IMR-90 (cell line): ENCODE measurements at regions of chr2 and their contacts with region 1.

Region 1: DNA sequence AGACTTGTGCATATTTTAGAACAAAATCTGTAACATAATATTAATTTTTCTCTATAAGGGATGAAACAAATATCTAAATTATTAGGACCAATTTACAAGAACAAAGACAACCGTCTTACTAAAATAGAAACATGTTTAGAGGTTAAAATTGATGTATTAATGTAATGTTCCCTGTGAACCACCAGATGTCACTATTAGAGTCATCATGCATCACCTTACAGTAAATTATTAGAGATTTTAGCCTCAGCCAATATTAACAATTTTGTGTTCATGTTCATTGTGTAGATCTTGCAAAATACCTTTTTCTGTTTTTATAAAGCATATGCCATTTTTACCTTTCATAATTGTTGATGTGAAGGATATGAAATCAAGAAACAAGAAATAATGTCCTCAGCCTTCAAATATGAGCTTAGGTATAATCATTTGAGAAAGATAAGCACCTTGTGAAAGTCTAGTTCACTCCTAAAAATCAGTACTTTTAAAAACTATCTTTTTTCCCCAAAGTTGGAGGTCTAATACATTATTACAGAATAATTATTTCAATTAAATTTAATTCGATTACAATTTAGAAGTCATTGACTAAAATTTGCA is 344.3 kb upstream of the KCNH7 start:
- DNase-seq: peak; percentile 32
- ATAC-seq: 0 out of 2 replicates have a peak, but pooled peaks have one; percentile 51
- H3K4me3 ChIP-seq: no peak overlapping the region
- H3K27ac ChIP-seq: no peak overlapping the region
- H3K4me1 ChIP-seq: no peaks in the 10 kb centered on the region
- H3K27me3 ChIP-seq: peaks cover 2% of the 10 kb centered on the region; the same call in 1 of the 2 replicates
- CTCF ChIP-seq: peak; percentile 60
- POLR2A ChIP-seq: no peak
- RAD21 ChIP-seq: peak; percentile 51

Region 2: DNA sequence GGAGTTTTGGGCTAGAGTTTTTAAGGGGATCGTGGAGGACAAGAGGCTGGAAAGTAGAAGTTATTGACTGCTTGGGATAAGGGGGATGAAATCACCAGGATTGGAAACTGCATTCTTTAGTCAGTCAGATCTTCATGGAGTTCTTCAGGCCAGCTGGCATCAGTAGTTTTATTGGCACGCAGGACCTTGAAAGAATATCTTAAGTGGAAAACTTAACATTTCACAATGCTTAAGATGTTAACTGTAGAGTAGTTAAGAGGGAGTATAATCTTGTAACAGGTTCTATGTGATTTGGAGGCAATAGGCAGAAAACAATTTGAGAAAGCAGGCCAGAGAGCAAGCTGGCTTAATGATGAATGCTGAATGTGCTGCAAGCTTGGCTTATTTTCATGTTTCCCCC is 43.9 kb before region 1 on chr2:
- CTCF ChIA-PET with region 1: no interaction called
- POLR2A ChIA-PET with region 1: no interaction called
- dilution Hi-C with region 1: no loop called
- in situ Hi-C with region 1: no loop called
- intact Hi-C with region 1: no loop called
- DNase-seq: no peak
- ATAC-seq: no peak
- H3K4me3 ChIP-seq: no peak overlapping the region
- H3K27ac ChIP-seq: no peak overlapping the region
- H3K4me1 ChIP-seq: no peaks in the 10 kb centered on the region
- H3K27me3 ChIP-seq: no peaks in the 10 kb centered on the region
- CTCF ChIP-seq: no peak
- POLR2A ChIP-seq: no peak
- RAD21 ChIP-seq: no peak

Region 3: DNA sequence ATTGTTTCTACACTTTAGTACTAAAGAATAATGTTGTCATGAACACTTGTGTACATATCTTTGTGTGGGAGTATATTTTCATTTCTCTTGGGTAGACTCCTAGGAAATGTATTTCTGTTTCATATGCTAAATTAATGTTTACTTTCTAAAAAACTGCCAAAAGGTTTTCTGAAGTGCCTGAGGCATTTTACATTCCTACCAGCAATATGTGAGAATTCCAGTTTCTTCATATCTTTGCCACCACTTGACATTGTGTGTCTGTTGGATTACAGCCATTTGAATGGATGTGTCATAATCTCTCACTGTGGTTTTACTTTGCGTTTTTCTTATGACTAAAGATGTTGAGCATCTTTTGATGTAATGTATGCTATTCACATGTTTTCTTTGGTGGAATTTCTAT is 83.9 kb after region 1 on chr2:
- CTCF ChIA-PET with region 1: no interaction called
- POLR2A ChIA-PET with region 1: no interaction called
- dilution Hi-C with region 1: no loop called
- in situ Hi-C with region 1: no loop called
- intact Hi-C with region 1: no loop called
- DNase-seq: peak; percentile 81
- ATAC-seq: peak; percentile 80
- H3K4me3 ChIP-seq: no peak overlapping the region
- H3K27ac ChIP-seq: no peak overlapping the region
- H3K4me1 ChIP-seq: no peaks in the 10 kb centered on the region
- H3K27me3 ChIP-seq: no peaks in the 10 kb centered on the region
- CTCF ChIP-seq: no peak
- POLR2A ChIP-seq: no peak
- RAD21 ChIP-seq: no peak

Region 4: DNA sequence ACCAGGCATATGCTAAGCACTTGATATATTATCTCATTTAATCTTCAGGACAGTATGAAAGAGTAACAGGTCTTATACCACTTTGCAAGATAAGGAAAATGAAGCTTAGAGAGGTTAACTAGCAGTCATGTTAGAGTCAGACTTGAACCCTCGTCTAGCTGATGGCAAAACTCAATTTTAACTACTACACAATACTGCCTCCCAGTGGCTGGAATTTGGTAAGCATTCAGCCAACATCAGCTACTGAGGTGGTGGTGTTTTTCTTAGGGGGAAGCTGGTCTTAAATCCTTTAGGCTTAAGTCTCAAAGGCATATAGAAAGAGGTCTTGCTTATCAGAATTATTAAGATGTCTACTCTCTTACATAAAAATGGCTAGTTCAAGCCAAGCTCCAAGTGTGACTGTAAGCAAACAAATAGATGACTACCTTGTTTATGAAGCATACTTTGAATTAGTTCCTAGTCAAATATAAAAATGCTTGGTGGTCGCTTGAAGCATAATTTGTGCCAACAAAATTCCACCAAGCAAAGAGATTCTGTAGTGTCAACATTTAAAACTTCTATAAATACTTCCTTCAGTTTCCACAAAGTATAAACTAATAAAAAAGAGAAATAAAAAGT is 878.4 kb after region 1 on chr2:
- CTCF ChIA-PET with region 1: interaction called, 11 read pairs
- POLR2A ChIA-PET with region 1: no interaction called
- dilution Hi-C with region 1: no loop called
- in situ Hi-C with region 1: loop called (anchors 5 kb)
- intact Hi-C with region 1: no loop called
- DNase-seq: peak; percentile 21
- ATAC-seq: peak; percentile 59; the same call in 1 of the 2 replicates
- H3K4me3 ChIP-seq: no peak overlapping the region
- H3K27ac ChIP-seq: no peak overlapping the region
- H3K4me1 ChIP-seq: no peaks in the 10 kb centered on the region
- H3K27me3 ChIP-seq: no peaks in the 10 kb centered on the region
- CTCF ChIP-seq: peak; percentile 66
- POLR2A ChIP-seq: no peak
- RAD21 ChIP-seq: peak; percentile 66

Region 5: GRCh38 chr2:164538240-164538866 is 1355.5 kb after region 1 on chr2:
- CTCF ChIA-PET with region 1: interaction called, 3 read pairs
- POLR2A ChIA-PET with region 1: no interaction called
- dilution Hi-C with region 1: no loop called
- in situ Hi-C with region 1: no loop called
- intact Hi-C with region 1: loop called (anchors 5 kb)
- DNase-seq: peak; percentile 29
- ATAC-seq: peak; percentile 82
- H3K4me3 ChIP-seq: no peak overlapping the region
- H3K27ac ChIP-seq: no peak overlapping the region
- H3K4me1 ChIP-seq: no peaks in the 10 kb centered on the region
- H3K27me3 ChIP-seq: no peaks in the 10 kb centered on the region
- CTCF ChIP-seq: peak; percentile 50
- POLR2A ChIP-seq: no peak
- RAD21 ChIP-seq: peak; percentile 48

Region 6: GRCh38 chr2:164554487-164554886 is 1371.6 kb after region 1 on chr2:
- CTCF ChIA-PET with region 1: interaction called, 12 read pairs
- POLR2A ChIA-PET with region 1: no interaction called
- dilution Hi-C with region 1: no loop called
- in situ Hi-C with region 1: no loop called
- intact Hi-C with region 1: no loop called
- DNase-seq: no peak
- ATAC-seq: no peak
- H3K4me3 ChIP-seq: no peak overlapping the region
- H3K27ac ChIP-seq: no peak overlapping the region
- H3K4me1 ChIP-seq: no peaks in the 10 kb centered on the region
- H3K27me3 ChIP-seq: no peaks in the 10 kb centered on the region
- CTCF ChIP-seq: no peak
- POLR2A ChIP-seq: no peak
- RAD21 ChIP-seq: no peak